ENCODE measurements at regions of chr3 and their contacts with region 1.

Region 1: GRCh38 chr3:15332405-15333098 is at the start of gene SH3BP5:
- DNase-seq: peak; percentile 71
- H3K4me3 Mint-ChIP-seq: peak within 1 kb of the TSS; percentile 80
- H3K27ac Mint-ChIP-seq: peak within 1 kb of the TSS; percentile 85
- H3K4me1 Mint-ChIP-seq: peaks cover 57% of the 10 kb centered on the region
- H3K27me3 Mint-ChIP-seq: peaks cover 6% of the 10 kb centered on the region
- total RNA-seq, gene SH3BP5: 33.8 to 38.2 TPM

Region 2: DNA sequence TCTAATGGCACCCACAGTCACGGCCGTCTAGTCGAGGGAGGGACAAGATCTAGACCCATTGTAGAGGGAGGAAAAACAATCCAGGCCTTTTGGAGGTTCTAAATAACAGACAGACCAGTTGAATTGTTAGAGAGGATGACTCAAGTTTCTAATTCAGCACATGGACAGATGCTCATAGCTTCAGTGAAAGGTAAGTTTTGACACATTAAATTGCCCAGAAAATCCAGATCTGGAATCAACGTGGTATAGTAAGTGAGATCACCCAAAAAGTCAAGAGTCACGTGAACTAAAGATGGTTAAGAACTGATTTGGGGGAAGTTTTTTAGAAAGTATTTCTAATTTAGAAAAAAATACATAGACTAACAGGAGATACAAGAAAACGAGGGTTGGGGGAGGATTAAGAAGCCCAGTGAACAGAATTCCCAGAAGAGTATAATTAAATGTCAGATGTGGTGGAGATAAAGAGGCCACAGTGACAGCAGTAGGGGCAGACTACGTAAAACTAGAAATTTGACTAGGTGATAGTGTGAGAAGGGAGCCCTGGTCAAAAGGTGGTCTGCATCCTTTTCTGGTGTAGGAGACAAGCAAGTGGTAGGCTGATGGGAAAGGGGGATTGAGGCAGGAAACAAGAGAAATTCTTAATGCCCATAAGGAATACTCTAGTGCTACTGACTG is 79.4 kb before region 1 on chr3:
- CTCF ChIA-PET with region 1: no interaction called
- POLR2A ChIA-PET with region 1: no interaction called
- DNase-seq: no peak
- H3K4me3 Mint-ChIP-seq: no peak overlapping the region
- H3K27ac Mint-ChIP-seq: peak overlapping the region; percentile 38
- H3K4me1 Mint-ChIP-seq: peaks cover 4% of the 10 kb centered on the region
- H3K27me3 Mint-ChIP-seq: no peaks in the 10 kb centered on the region

Region 3: GRCh38 chr3:15319575-15319974 is 13.0 kb before region 1 on chr3:
- CTCF ChIA-PET with region 1: interaction called, 13 read pairs
- POLR2A ChIA-PET with region 1: no interaction called
- DNase-seq: no peak
- H3K4me3 Mint-ChIP-seq: no peak overlapping the region
- H3K27ac Mint-ChIP-seq: no peak overlapping the region
- H3K4me1 Mint-ChIP-seq: peaks cover 48% of the 10 kb centered on the region
- H3K27me3 Mint-ChIP-seq: no peaks in the 10 kb centered on the region

Region 4: GRCh38 chr3:15345608-15346137 is 13.1 kb after region 1 on chr3:
- CTCF ChIA-PET with region 1: interaction called, 22 read pairs
- POLR2A ChIA-PET with region 1: no interaction called
- DNase-seq: peak; percentile 14
- H3K4me3 Mint-ChIP-seq: no peak overlapping the region
- H3K27ac Mint-ChIP-seq: no peak overlapping the region
- H3K4me1 Mint-ChIP-seq: peaks cover 46% of the 10 kb centered on the region
- H3K27me3 Mint-ChIP-seq: peaks cover 13% of the 10 kb centered on the region

Region 5: DNA sequence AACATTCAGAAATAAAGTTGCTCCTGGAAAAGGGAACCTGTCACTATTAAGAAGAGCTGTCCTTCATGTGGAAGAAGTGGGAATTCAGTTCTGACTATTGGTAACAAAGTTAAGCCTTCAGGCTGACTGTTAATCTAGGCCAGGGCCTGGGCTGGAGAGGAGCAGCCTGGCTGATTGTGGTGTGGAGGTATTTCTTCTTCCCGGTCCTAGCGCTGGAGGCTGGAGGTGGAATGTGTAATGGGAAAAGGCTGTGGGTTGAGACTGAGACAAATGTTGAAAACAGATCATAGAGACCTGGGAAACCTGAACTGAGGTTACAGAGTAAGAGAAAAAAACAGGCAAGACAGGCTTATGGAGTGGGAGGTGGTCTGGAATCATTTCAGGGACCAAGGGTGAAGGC is 23.6 kb after region 1 on chr3:
- CTCF ChIA-PET with region 1: interaction called, 22 read pairs
- POLR2A ChIA-PET with region 1: no interaction called
- DNase-seq: no peak
- H3K4me3 Mint-ChIP-seq: no peak overlapping the region
- H3K27ac Mint-ChIP-seq: peak overlapping the region; percentile 85
- H3K4me1 Mint-ChIP-seq: peaks cover 52% of the 10 kb centered on the region
- H3K27me3 Mint-ChIP-seq: no peaks in the 10 kb centered on the region

Region 6: DNA sequence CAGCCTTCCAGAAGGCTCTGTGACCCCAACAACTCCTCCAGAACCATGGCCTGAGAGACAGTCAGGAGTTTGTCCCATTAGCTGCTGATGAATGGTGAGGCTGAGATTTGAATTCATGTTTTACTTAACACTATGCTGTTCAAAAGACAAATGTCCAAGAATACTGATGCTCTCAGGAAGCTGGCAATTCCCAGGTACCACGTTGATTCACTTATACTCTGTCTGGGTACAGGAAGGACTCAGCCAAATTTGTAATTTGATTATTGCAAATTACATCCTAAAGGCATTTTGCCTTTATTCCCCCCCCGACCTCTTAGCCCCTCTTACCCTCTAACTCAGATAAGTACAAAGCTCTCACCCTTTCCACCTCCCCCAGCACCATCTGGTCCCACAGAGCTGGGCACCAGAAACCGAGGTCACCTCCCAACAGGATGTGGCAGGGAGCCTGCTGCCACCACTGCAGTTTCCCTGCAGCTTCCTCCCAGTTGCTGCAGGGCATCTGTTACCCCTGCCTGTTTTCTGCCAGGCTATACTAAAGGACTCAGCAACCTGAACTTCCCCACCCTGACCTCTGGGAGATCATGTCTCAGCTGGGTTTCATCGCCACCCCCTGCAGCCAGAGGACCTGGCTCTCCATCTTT is 128.5 kb after region 1 on chr3:
- CTCF ChIA-PET with region 1: no interaction called
- POLR2A ChIA-PET with region 1: no interaction called
- DNase-seq: peak; percentile 29
- H3K4me3 Mint-ChIP-seq: no peak overlapping the region
- H3K27ac Mint-ChIP-seq: no peak overlapping the region
- H3K4me1 Mint-ChIP-seq: peaks cover 26% of the 10 kb centered on the region
- H3K27me3 Mint-ChIP-seq: no peaks in the 10 kb centered on the region

Measured in activated CD4-positive, alpha-beta T cell treated with anti-CD3 and anti-CD28 coated beads, Interleukin-2, amount 10 ng/mL, durations not matched to agents 7 days and 5 days (primary cell).